HEK293 (cell line): ENCODE measurements at regions of chr2 and their contacts with region 1.

Region 1: DNA sequence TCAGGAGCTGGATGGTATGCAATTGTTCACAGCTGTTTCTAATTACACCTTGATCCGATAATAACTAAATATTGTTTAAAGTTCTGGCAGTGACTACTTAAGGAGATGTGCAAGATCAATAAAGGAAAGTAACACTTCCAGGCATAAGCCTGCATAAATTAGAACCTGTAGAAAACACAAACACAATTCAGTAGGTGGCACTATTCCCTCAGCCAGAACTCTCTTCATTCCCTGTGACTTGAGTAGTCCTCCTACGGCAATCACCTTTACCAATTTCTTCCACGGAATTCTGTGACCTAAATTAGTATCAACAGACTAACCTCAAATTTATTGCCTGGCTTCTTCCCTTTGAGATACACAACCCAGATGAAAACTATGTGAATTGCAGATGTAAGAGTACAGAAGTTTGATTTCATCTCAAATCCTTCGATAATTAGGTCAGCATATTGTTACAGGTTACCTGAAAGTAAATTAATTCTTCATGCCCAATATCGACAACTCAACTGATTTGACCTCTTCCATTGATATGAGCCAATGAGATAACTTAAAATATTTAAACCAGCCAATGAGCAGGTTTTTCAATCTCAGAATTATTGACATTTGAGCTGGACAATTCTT is 137.8 kb downstream of the PID1 start:
- H3K4me3 ChIP-seq: no peak overlapping the region
- H3K27ac ChIP-seq: no peak overlapping the region
- H3K4me1 ChIP-seq: no peaks in the 10 kb centered on the region
- CTCF ChIP-seq: peak; percentile 15; the same call in 1 of the 2 replicates

Region 2: DNA sequence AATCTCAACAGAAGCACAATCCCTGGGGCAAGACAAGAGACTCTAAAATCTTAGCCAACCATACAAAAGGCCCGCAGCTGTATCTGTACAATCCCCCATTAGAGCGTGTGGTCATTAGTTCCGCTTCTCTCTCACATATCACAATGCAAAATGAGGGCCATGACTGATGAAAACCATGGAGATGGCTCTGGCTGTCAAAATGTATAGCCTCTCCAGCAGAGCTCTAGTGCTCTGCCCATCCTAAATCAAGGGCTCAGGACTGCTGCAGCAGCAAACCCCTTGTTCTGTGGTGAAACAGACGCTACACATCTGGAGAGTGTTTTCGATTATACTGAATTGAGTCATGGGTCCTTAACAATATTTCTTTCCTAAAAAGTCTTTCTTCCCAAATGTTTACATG is 83.1 kb before region 1 on chr2:
- CTCF ChIA-PET with region 1: no interaction called
- POLR2A ChIA-PET with region 1: no interaction called
- H3K4me3 ChIP-seq: no peak overlapping the region
- H3K27ac ChIP-seq: no peak overlapping the region
- H3K4me1 ChIP-seq: no peaks in the 10 kb centered on the region
- CTCF ChIP-seq: no peak

Region 3: DNA sequence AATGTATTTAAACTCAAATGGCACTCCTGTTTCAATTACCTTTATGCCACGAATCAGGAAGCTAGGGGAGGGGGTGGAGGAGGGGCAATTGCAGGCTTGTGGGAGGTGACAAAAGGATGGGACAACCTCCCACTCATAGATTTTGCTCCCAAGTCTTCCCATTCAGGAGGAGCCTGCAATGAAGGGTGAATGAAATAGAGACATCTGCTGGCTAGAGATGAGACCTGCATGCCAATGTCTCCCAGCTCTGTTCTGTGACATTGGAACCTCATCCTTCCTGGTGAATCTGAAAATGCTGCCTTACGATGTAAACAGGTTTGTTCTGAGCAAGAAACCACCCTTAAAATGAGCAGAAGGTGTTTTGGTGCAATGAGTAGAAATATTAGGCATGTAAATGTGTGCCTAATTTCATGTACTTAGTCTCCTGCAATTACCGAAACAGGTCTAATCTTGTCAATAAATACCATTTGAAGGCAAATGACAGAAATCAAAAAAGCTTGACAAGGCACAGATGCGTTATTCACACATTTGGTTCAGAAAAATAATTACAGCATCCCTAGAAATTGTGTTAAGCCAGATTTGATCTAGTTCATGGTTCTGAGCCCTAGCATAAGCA is 140.6 kb after region 1 on chr2:
- CTCF ChIA-PET with region 1: interaction called, 17 read pairs
- POLR2A ChIA-PET with region 1: no interaction called
- H3K4me3 ChIP-seq: no peak overlapping the region
- H3K27ac ChIP-seq: no peak overlapping the region
- H3K4me1 ChIP-seq: no peaks in the 10 kb centered on the region
- CTCF ChIP-seq: 0 out of 2 replicates have a peak, but pooled peaks have one; percentile 42

Region 4: GRCh38 chr2:229703909-229704630 is 570.8 kb after region 1 on chr2:
- CTCF ChIA-PET with region 1: no interaction called
- POLR2A ChIA-PET with region 1: no interaction called
- H3K4me3 ChIP-seq: no peak overlapping the region
- H3K27ac ChIP-seq: no peak overlapping the region
- H3K4me1 ChIP-seq: no peaks in the 10 kb centered on the region
- CTCF ChIP-seq: no peak